Transverse colon (tissue), 4 donors: ENCODE measurements at regions of chr11 and their contacts with region 1.

Region 1: GRCh38 chr11:15157181-15157580 is 42.5 kb downstream of the INSC start:
- DNase-seq: no peak
- H3K4me3 ChIP-seq: no peak overlapping the region
- H3K27ac ChIP-seq: no peak overlapping the region
- H3K4me1 ChIP-seq: peaks cover 0 to 8% (median 7%) of the 10 kb centered on the region in 4 donors
- H3K27me3 ChIP-seq: no peaks in the 10 kb centered on the region
- CTCF ChIP-seq: no peak
- EP300 ChIP-seq: no peak
- POLR2A ChIP-seq: no peak

Region 2: DNA sequence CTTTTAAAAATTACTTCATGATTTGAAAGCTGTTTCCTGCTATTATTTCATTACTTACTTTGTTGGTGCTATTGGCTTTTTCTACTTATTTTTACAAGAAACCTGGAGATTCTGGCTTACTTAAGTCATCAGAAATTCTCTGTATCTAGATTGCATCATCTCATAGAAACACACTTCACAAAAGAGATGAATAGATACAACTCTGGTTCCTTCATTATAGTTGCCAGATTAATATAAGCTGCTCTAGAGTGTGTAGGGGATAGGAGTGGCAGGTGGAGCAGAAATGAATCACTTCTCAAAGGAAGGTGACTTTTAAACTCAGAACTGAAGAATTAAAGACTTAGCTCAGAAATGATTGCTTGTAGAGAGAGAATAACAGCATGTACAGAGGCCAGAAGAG is 285.1 kb before region 1 on chr11:
- in situ Hi-C with region 1: no loop called
- intact Hi-C with region 1: no loop called
- DNase-seq: no peak
- H3K4me3 ChIP-seq: no peak overlapping the region
- H3K27ac ChIP-seq: no peak overlapping the region
- H3K4me1 ChIP-seq: no peaks in the 10 kb centered on the region
- H3K27me3 ChIP-seq: no peaks in the 10 kb centered on the region
- CTCF ChIP-seq: no peak
- EP300 ChIP-seq: no peak
- POLR2A ChIP-seq: no peak

Region 3: GRCh38 chr11:15113381-15113780 is 43.8 kb before region 1 on chr11:
- in situ Hi-C with region 1: no loop called
- intact Hi-C with region 1: no loop called
- DNase-seq: peak; percentile 37
- H3K4me3 ChIP-seq: no peak overlapping the region
- H3K27ac ChIP-seq: no peak overlapping the region
- H3K4me1 ChIP-seq: peaks cover 0 to 8% (median 5%) of the 10 kb centered on the region in 4 donors
- H3K27me3 ChIP-seq: peaks cover 24% of the 10 kb centered on the region
- CTCF ChIP-seq: no peak
- EP300 ChIP-seq: no peak
- POLR2A ChIP-seq: no peak

Region 4: DNA sequence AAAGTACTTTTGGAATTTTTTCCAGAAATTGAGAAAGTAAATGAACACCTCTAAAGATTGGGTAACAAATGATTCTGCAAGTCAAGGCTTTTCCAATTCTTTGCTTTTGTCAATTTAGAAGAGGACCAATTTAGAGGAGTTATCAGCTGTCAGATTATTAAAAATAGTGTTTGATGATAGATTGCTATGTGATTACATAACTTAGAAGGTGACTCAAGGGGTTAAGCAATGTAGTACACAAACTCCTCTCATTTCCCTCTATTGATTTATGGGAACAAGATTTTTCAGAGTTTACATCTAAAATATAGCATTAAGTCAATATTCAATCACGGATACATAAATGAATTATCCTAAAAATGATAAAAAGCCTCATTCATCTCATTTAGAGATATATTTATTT is 27.8 kb after region 1 on chr11:
- in situ Hi-C with region 1: no loop called
- intact Hi-C with region 1: loop called (anchors 1 kb)
- DNase-seq: no peak
- H3K4me3 ChIP-seq: no peak overlapping the region
- H3K27ac ChIP-seq: no peak overlapping the region
- H3K4me1 ChIP-seq: no peaks in the 10 kb centered on the region
- H3K27me3 ChIP-seq: no peaks in the 10 kb centered on the region
- CTCF ChIP-seq: no peak
- EP300 ChIP-seq: no peak
- POLR2A ChIP-seq: no peak